MCF 10A (cell line): ENCODE measurements at regions of chr18 and their contacts with region 1.

Region 1: GRCh38 chr18:79988451-79989194 is at the start of gene TXNL4A:
- DNase-seq: peak; percentile 80
- H3K4me3 Mint-ChIP-seq: peak within 1 kb of the TSS; percentile 86
- H3K27ac Mint-ChIP-seq: peak within 1 kb of the TSS; percentile 94
- H3K4me1 Mint-ChIP-seq: peaks cover 8% of the 10 kb centered on the region
- H3K27me3 Mint-ChIP-seq: no peaks in the 10 kb centered on the region
- CTCF ChIP-seq: no peak
- total RNA-seq, gene TXNL4A: 207 and 245 TPM in 2 replicates

Region 2: DNA sequence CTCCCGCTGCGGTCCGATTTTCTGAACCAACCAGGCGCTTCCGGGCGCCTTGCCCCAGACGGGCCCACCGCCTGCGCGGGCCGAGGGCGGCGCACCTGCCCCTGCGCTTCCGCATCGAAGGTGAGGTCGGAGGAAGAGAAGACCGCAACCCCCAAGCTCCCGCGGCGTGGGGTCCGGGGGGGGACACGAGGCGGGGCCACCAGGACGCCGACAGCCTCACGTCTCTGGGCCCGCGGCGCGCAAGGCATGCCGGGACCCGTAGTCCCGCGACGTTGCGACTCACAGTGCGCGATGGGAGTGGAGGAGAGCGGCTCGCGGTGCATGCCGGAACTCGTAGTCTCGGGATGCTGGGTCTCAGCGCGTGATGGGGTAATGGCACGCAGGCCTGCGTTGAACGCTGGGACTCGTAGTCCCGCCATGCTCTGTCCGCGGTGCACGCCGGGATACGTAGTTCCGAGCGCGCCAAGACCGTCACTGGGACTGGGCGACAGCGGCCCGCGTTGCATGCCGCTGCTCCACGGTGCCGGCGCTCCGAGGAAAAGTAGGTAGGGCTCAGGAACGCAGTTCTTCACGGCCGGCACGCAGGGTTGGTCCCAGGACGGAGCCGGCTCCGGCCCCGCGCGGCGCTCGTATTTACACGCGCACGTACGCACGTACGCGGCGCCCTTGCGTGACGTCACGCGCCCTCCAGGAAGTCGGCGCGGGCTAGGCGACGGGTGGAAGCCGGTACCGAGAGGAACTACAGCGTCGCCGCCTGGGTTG is 309.3 kb before region 1 on chr18 and contains the start of gene CTDP1:
- CTCF ChIA-PET with region 1: interaction called, 3 read pairs
- POLR2A ChIA-PET with region 1: interaction called, 10 read pairs
- intact Hi-C with region 1: no loop called
- DNase-seq: peak; percentile 98
- H3K4me3 Mint-ChIP-seq: peak within 1 kb of the TSS; percentile 92
- H3K27ac Mint-ChIP-seq: peak within 1 kb of the TSS; percentile 97
- H3K4me1 Mint-ChIP-seq: peaks cover 5% of the 10 kb centered on the region
- H3K27me3 Mint-ChIP-seq: no peaks in the 10 kb centered on the region
- CTCF ChIP-seq: no peak
- total RNA-seq, gene CTDP1: 20.3 and 25.1 TPM in 2 replicates

Region 3: DNA sequence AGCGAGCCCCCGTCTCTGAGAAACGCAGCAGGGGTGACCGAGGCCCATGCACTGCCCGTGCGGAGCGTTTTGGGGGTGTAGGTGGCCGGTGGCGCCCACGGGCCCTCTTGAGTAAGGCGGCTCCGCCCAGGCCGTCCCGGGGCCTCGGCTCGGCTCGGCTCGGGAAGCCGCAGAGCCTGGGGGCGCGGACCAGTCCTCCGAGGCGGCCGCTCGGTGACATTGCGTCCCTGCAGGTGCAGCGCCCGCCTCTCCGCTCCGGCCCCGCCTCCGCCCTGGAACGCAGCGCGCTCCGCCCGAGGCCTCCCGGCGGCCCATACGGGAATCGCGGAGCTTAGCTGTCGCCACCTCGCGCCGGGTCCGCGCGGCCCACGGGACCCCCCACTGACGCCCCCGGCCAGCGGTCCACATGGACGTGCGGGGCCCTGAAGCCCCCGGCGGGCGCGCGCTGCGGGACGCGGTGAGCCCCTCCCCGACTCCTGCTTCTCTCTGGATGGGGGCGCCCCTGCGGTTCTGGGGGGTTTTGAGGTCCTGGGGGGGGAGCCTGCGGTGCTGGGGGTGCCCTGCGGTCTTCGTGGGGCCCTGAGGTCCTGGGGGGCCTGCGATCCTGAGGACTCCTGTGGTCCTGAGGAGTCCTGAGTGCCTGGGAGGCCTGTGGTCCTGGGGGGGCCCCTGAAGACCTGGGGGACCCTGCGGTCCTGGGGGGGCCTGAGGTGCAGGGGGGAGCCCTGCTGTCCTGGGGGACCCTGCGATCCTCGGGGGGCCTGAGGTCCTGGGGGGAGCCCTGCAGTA is 24.1 kb before region 1 on chr18 and contains the start of gene HSBP1L1:
- CTCF ChIA-PET with region 1: interaction called, 4 read pairs
- POLR2A ChIA-PET with region 1: interaction called, 71 read pairs
- intact Hi-C with region 1: loop called (anchors 2 kb)
- DNase-seq: peak; percentile 64
- H3K4me3 Mint-ChIP-seq: peak within 1 kb of the TSS; percentile 81
- H3K27ac Mint-ChIP-seq: peak within 1 kb of the TSS; percentile 46
- H3K4me1 Mint-ChIP-seq: peaks cover 19% of the 10 kb centered on the region
- H3K27me3 Mint-ChIP-seq: no peaks in the 10 kb centered on the region
- CTCF ChIP-seq: no peak
- total RNA-seq, gene HSBP1L1: 46.6 and 49.4 TPM in 2 replicates

Region 4: DNA sequence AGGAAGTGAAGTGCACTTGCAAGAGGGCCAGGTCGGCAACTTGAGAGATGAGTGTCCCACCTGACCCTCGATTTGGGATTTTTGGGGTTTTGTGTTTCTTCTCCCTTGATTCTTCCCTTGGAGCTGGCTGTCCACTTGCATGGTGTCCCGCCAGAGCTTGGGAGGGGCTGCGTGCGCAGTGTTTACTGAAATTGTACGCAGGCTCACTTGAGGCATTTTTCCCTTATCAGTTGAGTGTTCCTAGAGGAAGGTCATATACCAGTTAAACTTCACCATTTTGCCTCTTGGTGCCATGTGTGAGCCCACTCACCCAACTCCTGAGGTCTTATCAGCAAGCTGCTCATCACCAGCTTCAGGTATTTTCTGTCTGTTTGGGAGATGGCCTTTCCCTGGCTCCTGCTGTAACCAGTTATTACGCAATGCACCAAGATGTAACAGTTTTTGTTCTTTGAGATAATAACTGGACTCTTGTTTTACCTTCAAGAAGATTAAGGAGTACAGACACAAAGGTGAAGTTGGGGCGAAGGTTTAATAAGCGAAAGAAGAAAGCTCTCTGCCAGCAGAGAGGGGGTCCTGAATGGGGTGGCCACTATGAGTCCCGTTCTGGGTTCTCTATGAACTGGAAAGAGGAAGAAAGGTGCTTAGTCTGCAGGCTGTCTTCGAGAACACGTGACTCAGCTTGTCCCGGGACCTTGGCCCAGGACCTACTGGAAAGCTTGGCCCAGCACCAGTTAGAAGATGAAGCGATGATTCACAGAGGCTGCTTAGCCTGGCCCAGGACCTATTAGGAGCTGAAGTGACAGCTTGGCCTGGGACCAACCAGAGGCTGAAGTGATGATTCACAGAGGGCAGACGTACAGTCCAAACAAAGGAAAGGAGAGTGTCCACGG is 21.3 kb after region 1 on chr18:
- CTCF ChIA-PET with region 1: interaction called, 4 read pairs
- POLR2A ChIA-PET with region 1: interaction called, 77 read pairs
- intact Hi-C with region 1: no loop called
- DNase-seq: peak; percentile 99
- H3K4me3 Mint-ChIP-seq: peak overlapping the region; percentile 53
- H3K27ac Mint-ChIP-seq: peak overlapping the region; percentile 72
- H3K4me1 Mint-ChIP-seq: peaks cover 19% of the 10 kb centered on the region
- H3K27me3 Mint-ChIP-seq: no peaks in the 10 kb centered on the region
- CTCF ChIP-seq: no peak

Region 5: GRCh38 chr18:80067321-80067720 is 78.7 kb after region 1 on chr18:
- CTCF ChIA-PET with region 1: no interaction called
- POLR2A ChIA-PET with region 1: no interaction called
- intact Hi-C with region 1: no loop called
- DNase-seq: no peak
- H3K4me3 Mint-ChIP-seq: no peak overlapping the region
- H3K27ac Mint-ChIP-seq: no peak overlapping the region
- H3K4me1 Mint-ChIP-seq: no peaks in the 10 kb centered on the region
- H3K27me3 Mint-ChIP-seq: no peaks in the 10 kb centered on the region
- CTCF ChIP-seq: no peak

Region 6: DNA sequence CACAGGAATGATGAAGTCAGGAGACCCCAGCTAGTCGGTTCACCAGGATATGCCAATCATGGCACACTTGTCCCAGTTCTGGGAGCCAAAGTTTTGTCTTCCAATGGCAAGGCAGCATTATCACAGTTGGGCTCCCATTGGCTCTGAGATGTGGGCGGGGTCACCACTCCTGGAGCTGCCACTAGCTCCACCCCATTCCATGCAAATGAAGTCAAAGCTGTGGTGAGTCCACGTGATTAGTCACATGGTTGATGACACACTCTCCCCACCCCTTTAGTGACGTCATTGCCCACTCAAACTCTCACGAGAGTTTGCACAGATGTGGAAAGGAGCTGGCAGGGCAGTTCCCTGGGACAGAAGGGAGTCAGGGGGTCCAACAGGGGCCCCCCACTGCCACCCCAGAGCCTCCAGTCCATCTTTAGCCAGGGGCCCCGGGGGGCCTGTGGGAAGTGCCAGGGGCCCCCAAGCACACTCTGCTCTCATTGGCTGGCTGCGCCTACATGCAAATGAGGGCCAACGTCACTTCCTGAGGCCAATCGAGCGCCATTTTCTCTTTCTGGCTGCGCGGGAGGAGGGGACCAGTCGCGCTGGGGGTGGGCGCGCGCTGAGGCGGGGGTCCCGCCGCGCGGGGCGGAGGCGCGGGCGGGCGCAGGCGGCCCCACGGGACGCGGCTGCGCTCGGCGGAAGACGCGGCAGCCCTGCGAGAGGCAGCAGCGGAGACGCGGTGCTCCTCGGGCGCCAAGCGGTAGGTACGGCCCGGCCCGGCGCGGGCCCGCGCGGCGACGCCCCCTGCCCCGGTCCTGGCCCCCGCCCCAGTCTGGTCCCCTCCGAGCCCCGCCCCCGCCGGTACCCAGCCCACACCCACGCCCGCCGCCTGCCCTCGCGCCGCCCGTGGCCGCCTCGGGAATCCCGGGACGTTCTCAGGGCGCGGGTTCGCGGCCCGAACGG is 120.4 kb after region 1 on chr18 and contains the start of gene ADNP2:
- CTCF ChIA-PET with region 1: no interaction called
- POLR2A ChIA-PET with region 1: interaction called, 7 read pairs
- intact Hi-C with region 1: loop called (anchors 1 kb)
- DNase-seq: peak; percentile 98
- H3K4me3 Mint-ChIP-seq: peak within 1 kb of the TSS; percentile 70
- H3K27ac Mint-ChIP-seq: peak within 1 kb of the TSS; percentile 86
- H3K4me1 Mint-ChIP-seq: peaks cover 14% of the 10 kb centered on the region
- H3K27me3 Mint-ChIP-seq: no peaks in the 10 kb centered on the region
- CTCF ChIP-seq: no peak
- total RNA-seq, gene ADNP2: 19.6 and 21.1 TPM in 2 replicates

Region 7: GRCh38 chr18:80147418-80148325 is 159.0 kb after region 1 on chr18:
- CTCF ChIA-PET with region 1: interaction called, 3 read pairs
- POLR2A ChIA-PET with region 1: interaction called, 6 read pairs
- intact Hi-C with region 1: loop called (anchors 5 kb)
- DNase-seq: peak; percentile 79
- H3K4me3 Mint-ChIP-seq: peak overlapping the region; percentile 73
- H3K27ac Mint-ChIP-seq: peak overlapping the region; percentile 76
- H3K4me1 Mint-ChIP-seq: no peaks in the 10 kb centered on the region
- H3K27me3 Mint-ChIP-seq: no peaks in the 10 kb centered on the region
- CTCF ChIP-seq: no peak